Adrenal gland (tissue), 19 donors: ENCODE measurements at regions of chr11 and their contacts with region 1.

Region 1: GRCh38 chr11:7571640-7572000 is 57.8 kb downstream of the PPFIBP2 start:
- DNase-seq: peak; percentile 54 to 89 (median 76)
- H3K4me3 ChIP-seq: no peak overlapping the region
- H3K27ac ChIP-seq: peak overlapping the region in 1 of 5 donors; percentile 64
- H3K4me1 ChIP-seq: peaks cover 0 to 33% of the 10 kb centered on the region in 2 donors
- H3K27me3 ChIP-seq: no peaks in the 10 kb centered on the region
- CTCF ChIP-seq: peak; percentile 90 to 97 (median 94)
- POLR2A ChIP-seq: no peak

Region 2: GRCh38 chr11:7208391-7208790 is 363.2 kb before region 1 on chr11:
- intact Hi-C with region 1: no loop called
- DNase-seq: no peak
- H3K4me3 ChIP-seq: no peak overlapping the region
- H3K27ac ChIP-seq: no peak overlapping the region
- H3K4me1 ChIP-seq: no peaks in the 10 kb centered on the region
- H3K27me3 ChIP-seq: no peaks in the 10 kb centered on the region
- CTCF ChIP-seq: no peak
- POLR2A ChIP-seq: no peak

Region 3: DNA sequence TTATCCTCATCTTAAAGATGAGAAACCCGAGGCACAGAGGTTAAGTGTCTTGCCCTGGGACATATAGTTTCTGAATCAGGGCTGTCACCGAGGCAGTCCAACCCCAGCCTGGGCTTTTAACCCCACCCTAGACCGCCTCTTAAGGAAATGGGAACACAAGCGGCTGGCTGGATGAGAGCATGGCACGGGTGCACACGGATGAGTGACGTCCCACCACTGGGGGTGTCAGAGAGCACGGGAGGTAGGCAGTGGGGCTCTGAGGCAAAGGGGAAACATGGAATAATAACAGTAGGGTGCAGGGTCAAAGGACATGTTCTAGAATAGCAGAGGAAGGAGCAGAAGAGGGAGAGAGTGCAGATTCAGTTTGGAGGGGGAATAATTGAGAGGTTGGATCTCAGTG is 35.5 kb before region 1 on chr11:
- intact Hi-C with region 1: no loop called
- DNase-seq: no peak
- H3K4me3 ChIP-seq: no peak overlapping the region
- H3K27ac ChIP-seq: no peak overlapping the region
- H3K4me1 ChIP-seq: peaks cover 0 to 10% of the 10 kb centered on the region in 2 donors
- H3K27me3 ChIP-seq: no peaks in the 10 kb centered on the region
- CTCF ChIP-seq: no peak
- POLR2A ChIP-seq: no peak

Region 4: GRCh38 chr11:7651140-7651551 is 79.5 kb after region 1 on chr11:
- intact Hi-C with region 1: loop called in 1 of 2 experiments (anchors 5 kb)
- DNase-seq: peak in 1 of 7 donors; percentile 46
- H3K4me3 ChIP-seq: no peak overlapping the region
- H3K27ac ChIP-seq: no peak overlapping the region
- H3K4me1 ChIP-seq: peaks cover 0 to 1% of the 10 kb centered on the region in 2 donors
- H3K27me3 ChIP-seq: no peaks in the 10 kb centered on the region
- CTCF ChIP-seq: no peak
- POLR2A ChIP-seq: no peak

Region 5: DNA sequence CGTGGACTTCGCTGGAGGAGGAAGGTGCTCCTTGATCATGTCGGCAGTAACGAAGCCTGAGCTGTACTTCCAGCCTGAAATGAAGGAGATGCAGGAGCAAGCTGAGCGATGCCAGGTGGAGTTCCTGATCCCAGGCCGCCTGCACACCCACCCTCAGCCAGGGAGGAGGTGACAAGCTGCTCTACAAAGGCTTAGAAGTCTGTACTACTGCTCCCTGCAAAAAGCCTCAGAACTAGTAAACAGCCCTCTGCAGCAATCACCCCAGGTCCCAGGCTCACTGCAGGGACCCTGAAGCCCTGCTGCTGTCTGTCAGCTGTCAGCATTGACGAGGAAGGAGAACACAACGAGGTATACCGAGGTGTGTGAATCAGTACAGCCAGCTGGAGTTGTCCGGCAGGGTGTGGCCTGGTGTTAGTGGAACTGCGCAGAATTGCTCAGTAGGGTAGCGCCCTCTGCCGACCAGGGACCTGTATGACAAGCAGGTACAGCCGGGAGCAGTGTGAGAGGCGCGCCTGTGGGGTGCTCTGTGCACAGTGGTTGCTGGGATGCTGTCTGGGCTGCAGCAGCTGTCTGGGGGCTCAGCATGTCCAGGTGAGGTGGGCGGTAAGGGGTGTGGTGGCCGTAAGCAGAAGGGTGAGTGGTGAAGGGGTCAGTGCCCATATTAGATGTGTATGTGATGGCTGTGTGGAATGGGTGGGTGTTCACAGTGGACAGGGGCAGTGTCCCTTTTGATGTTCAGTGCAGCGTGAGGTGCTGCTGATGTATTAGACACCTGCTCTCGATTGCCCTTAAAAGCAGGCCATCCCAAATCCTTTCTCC is 94.1 kb after region 1 on chr11:
- intact Hi-C with region 1: loop called (anchors 5 kb)
- DNase-seq: peak; percentile 74 to 93 (median 85)
- H3K4me3 ChIP-seq: no peak overlapping the region
- H3K27ac ChIP-seq: no peak overlapping the region
- H3K4me1 ChIP-seq: no peaks in the 10 kb centered on the region
- H3K27me3 ChIP-seq: no peaks in the 10 kb centered on the region
- CTCF ChIP-seq: peak; percentile 79 to 93 (median 86)
- POLR2A ChIP-seq: no peak

Region 6: GRCh38 chr11:7672960-7673723 is 101.5 kb after region 1 on chr11 and contains the start of gene CYB5R2:
- intact Hi-C with region 1: loop called (anchors 5 kb)
- DNase-seq: peak; percentile 42 to 68 (median 59)
- H3K4me3 ChIP-seq: peak within 1 kb of the TSS in 2 of 4 donors; percentile 7 to 55
- H3K27ac ChIP-seq: peak within 1 kb of the TSS in 1 of 5 donors; percentile 7
- H3K4me1 ChIP-seq: peaks cover 6 to 15% of the 10 kb centered on the region in 2 donors
- H3K27me3 ChIP-seq: no peaks in the 10 kb centered on the region
- CTCF ChIP-seq: no peak
- POLR2A ChIP-seq: no peak
- total RNA-seq, gene CYB5R2: 1.6 to 23.8 (median 4.4) TPM